ENCODE measurements at regions of chrX and their contacts with region 1.

Region 1: GRCh38 chrX:71532753-71533425 is at the start of gene OGT:
- H3K4me3 Mint-ChIP-seq: peak within 1 kb of the TSS; percentile 99
- H3K27ac Mint-ChIP-seq: peak within 1 kb of the TSS; percentile 98
- H3K4me1 Mint-ChIP-seq: peaks cover 7% of the 10 kb centered on the region
- H3K27me3 Mint-ChIP-seq: no peaks in the 10 kb centered on the region

Region 2: DNA sequence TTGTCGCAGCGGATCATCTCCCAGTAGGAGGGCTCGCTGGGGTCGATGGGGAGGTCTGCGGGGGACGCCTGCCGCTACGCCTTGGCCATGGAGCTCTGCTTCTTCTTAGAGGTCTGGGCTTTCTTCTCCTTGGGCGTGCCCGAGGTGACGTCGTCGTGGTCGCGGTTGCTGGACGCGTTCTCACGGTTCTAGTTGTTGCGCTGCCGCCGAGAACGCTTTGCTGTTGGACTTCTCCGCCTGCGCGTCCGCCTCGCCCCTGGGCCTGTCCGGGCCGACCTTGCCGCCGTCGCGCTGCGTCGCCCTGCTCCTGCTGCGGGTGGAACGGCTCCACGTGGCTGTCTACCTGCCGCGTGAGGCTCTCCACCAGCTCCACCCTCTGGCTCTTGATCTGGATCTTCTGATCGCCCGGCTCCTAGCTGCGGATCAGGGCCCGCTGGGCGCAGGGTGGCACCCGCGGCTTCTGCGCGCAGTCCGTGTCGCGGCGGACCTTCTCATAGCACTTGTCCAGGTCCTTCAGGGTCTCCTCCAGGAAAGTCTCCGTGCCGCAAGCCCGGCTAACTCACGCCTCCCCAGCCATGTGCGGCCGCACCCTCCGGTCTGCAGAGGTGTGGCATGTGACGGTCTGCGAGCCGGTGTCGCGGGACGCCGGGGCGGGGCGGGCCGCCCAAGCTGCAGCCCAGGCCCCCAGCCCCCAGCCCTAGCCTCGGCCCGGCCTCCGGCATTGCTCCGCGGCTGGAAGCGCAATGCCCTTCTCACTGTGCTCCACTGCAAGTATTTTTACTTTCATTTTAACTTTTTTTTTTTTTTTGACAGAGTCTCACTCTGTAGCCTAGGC is 40.4 kb before region 1 on chrX:
- intact Hi-C with region 1: loop called (anchors 5 kb)
- H3K4me3 Mint-ChIP-seq: peak overlapping the region; percentile 80
- H3K27ac Mint-ChIP-seq: peak overlapping the region; percentile 81
- H3K4me1 Mint-ChIP-seq: peaks cover 17% of the 10 kb centered on the region
- H3K27me3 Mint-ChIP-seq: peaks cover 6% of the 10 kb centered on the region

Region 3: DNA sequence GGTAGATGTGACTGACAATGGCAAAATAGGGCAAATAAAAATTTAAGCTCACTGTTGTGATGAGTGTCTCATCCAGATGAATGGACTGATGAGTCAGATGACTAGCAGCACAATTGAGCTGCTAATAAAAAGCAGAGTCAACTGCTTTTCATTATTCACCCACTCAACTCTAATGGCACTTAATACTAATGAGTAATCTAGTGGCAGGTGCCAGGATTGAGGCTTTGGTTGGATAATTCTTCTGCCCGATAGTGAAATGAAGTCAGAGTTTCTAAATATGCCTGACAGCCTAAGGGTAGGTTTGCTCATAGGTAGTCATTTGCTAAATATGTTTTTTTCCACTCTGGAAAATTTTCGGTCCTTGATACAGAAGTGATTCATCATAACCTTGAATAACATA is 10.4 kb after region 1 on chrX:
- intact Hi-C with region 1: no loop called
- H3K4me3 Mint-ChIP-seq: no peak overlapping the region
- H3K27ac Mint-ChIP-seq: no peak overlapping the region
- H3K4me1 Mint-ChIP-seq: peaks cover 31% of the 10 kb centered on the region
- H3K27me3 Mint-ChIP-seq: no peaks in the 10 kb centered on the region

Measured in dendritic cell treated with granulocyte-macrophage colony-stimulating factor and Interleukin-4, amounts not matched to agents 40 ng/mL and 50 ng/mL, for 4 days (primary cell).